ENCODE measurements at regions of chr12 and their contacts with region 1.

Region 1: GRCh38 chr12:56117778-56118687 is at the start of gene ZC3H10:
- DNase-seq: peak; percentile 100
- ATAC-seq: peak; percentile 77
- H3K4me3 ChIP-seq: peak within 1 kb of the TSS; percentile 96
- H3K27ac ChIP-seq: peak within 1 kb of the TSS; percentile 90
- H3K4me1 ChIP-seq: peaks cover 27% of the 10 kb centered on the region
- H3K27me3 ChIP-seq: no peaks in the 10 kb centered on the region
- CTCF ChIP-seq: peak; percentile 51
- total RNA-seq, gene ZC3H10: 4.8 and 5.6 TPM in 2 replicates

Region 2: GRCh38 chr12:56041552-56042429 is 76.2 kb before region 1 on chr12 and contains the start of gene RPS26:
- CTCF ChIA-PET with region 1: interaction called, 5 read pairs
- POLR2A ChIA-PET with region 1: no interaction called
- intact Hi-C with region 1: loop called (anchors 5 kb)
- DNase-seq: peak; percentile 99
- ATAC-seq: peak; percentile 95
- H3K4me3 ChIP-seq: peak within 1 kb of the TSS; percentile 80
- H3K27ac ChIP-seq: peak within 1 kb of the TSS; percentile 76
- H3K4me1 ChIP-seq: peaks cover 19% of the 10 kb centered on the region
- H3K27me3 ChIP-seq: no peaks in the 10 kb centered on the region
- CTCF ChIP-seq: peak; percentile 59
- total RNA-seq, gene RPS26: 183 and 320 TPM in 2 replicates

Region 3: DNA sequence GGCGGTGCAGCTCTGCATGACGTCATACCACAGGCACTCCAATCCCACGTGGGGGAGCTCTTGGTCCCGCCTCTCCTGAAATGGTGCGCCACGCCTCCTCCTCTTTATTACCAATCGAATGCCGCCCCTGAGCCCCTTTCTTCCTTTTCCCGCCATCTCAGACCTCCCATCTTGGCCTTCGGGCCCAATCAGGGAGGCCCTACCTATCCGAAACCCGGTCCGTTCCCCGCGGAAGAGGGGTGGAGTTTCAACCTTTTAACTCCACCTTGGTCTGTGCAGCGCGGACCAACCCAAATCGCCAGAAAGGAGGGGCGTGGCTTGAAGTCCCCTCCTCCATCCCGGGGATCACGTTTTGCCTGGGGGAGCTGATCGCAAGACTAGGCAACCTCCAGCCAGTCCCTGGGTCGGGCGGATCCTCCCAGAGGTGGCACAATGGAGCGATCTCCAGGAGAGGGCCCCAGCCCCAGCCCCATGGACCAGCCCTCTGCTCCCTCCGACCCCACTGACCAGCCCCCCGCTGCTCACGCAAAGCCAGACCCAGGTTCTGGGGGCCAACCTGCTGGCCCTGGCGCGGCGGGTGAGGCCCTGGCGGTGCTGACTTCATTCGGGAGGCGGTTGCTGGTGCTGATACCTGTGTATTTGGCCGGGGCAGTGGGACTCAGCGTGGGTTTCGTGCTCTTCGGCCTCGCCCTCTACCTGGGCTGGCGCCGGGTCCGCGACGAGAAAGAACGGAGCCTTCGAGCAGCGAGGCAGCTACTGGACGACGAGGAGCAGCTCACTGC is 10.0 kb after region 1 on chr12 and contains the start of gene ESYT1:
- CTCF ChIA-PET with region 1: interaction called, 11 read pairs
- POLR2A ChIA-PET with region 1: interaction called, 4 read pairs
- intact Hi-C with region 1: no loop called
- DNase-seq: peak; percentile 100
- ATAC-seq: peak; percentile 90
- H3K4me3 ChIP-seq: peak within 1 kb of the TSS; percentile 96
- H3K27ac ChIP-seq: peak within 1 kb of the TSS; percentile 39; the same call in 1 of the 2 replicates
- H3K4me1 ChIP-seq: peaks cover 33% of the 10 kb centered on the region
- H3K27me3 ChIP-seq: no peaks in the 10 kb centered on the region
- CTCF ChIP-seq: no peak
- total RNA-seq, gene ESYT1: 120 and 176 TPM in 2 replicates

Region 4: DNA sequence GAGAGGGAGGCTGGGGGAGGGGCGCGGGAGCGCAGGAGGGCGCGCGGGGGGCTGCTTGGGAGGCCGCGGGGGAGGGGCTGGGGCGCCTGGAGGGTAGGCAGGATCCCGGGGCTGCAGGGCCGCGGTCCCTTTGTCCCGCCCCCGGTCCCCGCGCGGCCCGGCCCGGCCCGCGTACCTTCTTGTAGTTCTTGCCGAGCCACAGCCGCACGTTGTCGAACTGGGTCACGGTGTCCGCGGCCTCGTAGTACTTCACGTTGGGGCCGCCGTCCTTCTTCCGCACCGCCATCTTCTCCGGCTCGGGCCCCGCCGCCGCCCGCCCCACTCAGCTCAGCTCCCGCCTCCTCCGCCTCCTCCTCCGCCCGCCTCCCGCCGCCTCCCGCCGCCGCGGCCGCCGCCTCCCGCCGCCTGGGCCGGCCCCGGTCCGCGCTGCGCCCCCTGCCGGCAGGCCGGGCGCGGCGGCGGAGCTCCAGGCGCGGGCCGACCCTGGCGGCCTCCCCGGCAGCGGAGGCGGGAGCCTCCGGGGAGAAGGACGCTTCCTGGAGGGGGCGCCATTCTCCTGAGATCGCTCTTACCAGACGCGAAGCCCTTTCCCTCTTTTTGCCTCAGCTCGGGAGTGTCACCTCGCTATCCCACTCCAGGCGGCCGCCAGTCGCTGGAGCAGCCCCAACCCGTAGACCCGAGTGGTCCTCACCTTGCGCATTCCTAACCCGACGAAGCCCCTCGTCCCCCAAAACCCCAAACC is 71.3 kb after region 1 on chr12 and contains the start of gene SMARCC2:
- CTCF ChIA-PET with region 1: interaction called, 37 read pairs
- POLR2A ChIA-PET with region 1: interaction called, 7 read pairs
- intact Hi-C with region 1: loop called (anchors 1 kb)
- DNase-seq: peak; percentile 93
- ATAC-seq: peak; percentile 86
- H3K4me3 ChIP-seq: peak within 1 kb of the TSS; percentile 94
- H3K27ac ChIP-seq: peak within 1 kb of the TSS; percentile 41
- H3K4me1 ChIP-seq: peaks cover 21% of the 10 kb centered on the region
- H3K27me3 ChIP-seq: no peaks in the 10 kb centered on the region
- CTCF ChIP-seq: peak; percentile 65
- total RNA-seq, gene SMARCC2: 38.4 and 39.4 TPM in 2 replicates

Region 5: DNA sequence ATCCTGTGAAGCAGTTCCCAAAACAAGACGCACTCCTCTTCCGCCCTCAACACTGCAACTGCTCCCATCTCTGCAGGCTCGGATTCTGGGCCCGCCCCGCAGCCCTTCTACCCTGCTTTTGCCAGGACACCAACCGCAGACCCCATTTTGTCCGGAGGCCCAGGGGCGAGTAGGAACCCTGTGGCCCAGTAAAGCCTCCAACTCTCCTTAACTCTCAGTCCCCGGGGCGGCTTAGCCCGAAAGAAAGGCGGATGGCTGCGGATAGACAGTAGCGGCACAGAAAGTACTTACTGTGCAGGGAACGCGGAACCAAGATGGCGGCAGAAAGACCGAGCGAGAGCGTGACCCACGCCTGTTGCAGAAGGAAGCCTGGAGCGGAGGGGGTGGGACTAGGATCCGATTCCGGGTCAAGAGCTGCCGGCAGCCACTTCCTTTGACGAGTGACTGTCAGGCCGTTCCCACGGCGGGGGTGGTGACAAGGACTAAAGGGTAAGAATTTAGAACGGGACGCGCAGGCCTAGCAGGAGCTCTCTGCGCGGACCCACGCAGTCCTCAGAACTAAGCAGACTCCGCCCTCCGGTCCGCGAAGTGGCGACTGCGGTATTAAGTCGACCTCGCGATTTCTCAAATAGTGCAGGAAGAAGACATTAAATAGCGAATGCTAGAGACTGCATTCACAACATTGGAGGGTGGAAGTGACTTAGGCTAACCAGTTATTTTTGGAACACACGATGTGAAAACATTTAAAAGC is 607.1 kb after region 1 on chr12 and contains the start of gene NACA:
- CTCF ChIA-PET with region 1: no interaction called
- POLR2A ChIA-PET with region 1: interaction called, 14 read pairs
- intact Hi-C with region 1: no loop called
- DNase-seq: peak; percentile 97
- ATAC-seq: peak; percentile 94
- H3K4me3 ChIP-seq: peak within 1 kb of the TSS; percentile 88
- H3K27ac ChIP-seq: peak within 1 kb of the TSS; percentile 77
- H3K4me1 ChIP-seq: peaks cover 39% of the 10 kb centered on the region
- H3K27me3 ChIP-seq: no peaks in the 10 kb centered on the region
- CTCF ChIP-seq: no peak
- total RNA-seq, gene NACA: 839 and 1,420 TPM in 2 replicates